SK-N-SH (cell line): ENCODE measurements at regions of chr5 and their contacts with region 1.

Region 1: GRCh38 chr5:140042643-140043500 is at the start of gene NRG2:
- DNase-seq: peak; percentile 94
- H3K4me3 ChIP-seq: peak within 1 kb of the TSS; percentile 88 to 92
- H3K27ac ChIP-seq: peak within 1 kb of the TSS; percentile 67 to 93; a peak in 3 of 4 replicates
- H3K4me1 ChIP-seq: peaks cover 0 to 32% of the 10 kb centered on the region in 2 experiments; a peak in 2 of 4 replicates
- H3K27me3 ChIP-seq: 0 out of 2 replicates have a peak, but pooled peaks cover 4% of the 10 kb centered on the region
- CTCF ChIP-seq: peak; percentile 62
- EP300 ChIP-seq: no peak
- RAD21 ChIP-seq: no peak
- polyA plus RNA-seq, gene NRG2: 3.5 and 3.7 TPM in 2 replicates

Region 2: DNA sequence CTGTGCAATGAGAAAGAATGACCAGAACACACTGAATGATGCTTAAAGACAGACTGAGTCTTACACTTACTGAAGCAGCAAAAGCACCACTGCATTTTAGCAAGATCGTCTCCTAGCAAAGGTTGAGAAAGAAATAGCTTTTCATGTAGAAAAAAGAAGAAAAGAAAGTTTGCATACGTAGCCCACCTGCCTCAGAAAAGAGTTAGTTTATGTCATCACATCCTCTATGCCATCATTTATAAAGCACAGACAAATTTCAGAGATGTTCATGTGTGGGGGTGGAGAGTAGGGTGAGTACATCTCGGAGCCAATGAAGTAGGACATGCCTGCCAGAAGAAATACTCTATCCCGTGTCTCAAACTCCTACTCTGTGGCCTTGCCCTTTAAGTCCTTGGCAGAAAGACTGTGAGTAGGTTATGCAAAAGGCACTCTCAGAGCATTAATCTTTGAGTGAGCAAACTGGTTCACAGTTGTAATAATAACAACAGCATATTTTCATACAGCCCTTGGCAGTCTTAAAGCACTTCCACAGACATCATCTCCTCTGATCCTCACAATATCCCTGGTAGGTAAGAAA is 22.2 kb before region 1 on chr5:
- CTCF ChIA-PET with region 1: interaction called, 18 read pairs
- POLR2A ChIA-PET with region 1: no interaction called
- DNase-seq: no peak
- H3K4me3 ChIP-seq: no peak overlapping the region
- H3K27ac ChIP-seq: no peak overlapping the region
- H3K4me1 ChIP-seq: peaks cover 0 to 10% of the 10 kb centered on the region in 2 experiments; a peak in 1 of 4 replicates
- H3K27me3 ChIP-seq: no peaks in the 10 kb centered on the region
- CTCF ChIP-seq: no peak
- EP300 ChIP-seq: no peak
- RAD21 ChIP-seq: no peak

Region 3: DNA sequence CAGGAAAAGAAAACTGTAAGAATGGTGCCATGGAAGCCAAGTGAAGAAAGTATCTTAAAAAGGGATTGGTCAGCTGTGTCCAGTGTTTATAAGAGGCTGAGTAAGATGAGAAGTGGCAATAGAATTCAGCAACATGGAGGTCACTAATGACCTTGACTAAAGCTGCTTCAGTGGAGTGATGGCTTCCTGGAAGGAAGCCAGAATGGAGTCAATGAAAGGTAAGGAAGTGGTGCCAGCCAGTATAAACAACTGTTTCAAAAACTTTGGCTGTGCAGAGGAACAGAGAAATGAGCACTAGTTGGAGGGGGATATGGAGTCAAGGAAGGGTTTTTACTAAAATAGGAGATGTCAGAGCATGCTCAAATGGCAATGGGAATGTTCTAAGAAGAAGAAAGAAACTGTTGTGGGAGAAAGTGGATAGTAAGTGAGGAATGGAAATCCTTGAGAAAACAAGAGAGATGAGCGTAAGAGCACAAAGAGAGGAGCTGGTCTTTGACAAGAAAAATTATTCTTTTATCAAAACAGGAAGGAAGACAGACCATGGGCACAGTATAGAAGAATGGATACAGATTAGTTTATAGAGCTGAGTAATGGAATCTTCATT is 11.3 kb after region 1 on chr5:
- CTCF ChIA-PET with region 1: interaction called, 22 read pairs
- POLR2A ChIA-PET with region 1: no interaction called
- DNase-seq: no peak
- H3K4me3 ChIP-seq: no peak overlapping the region
- H3K27ac ChIP-seq: no peak overlapping the region
- H3K4me1 ChIP-seq: no peaks in the 10 kb centered on the region
- H3K27me3 ChIP-seq: peaks cover 17% of the 10 kb centered on the region; the same call in 1 of the 2 replicates
- CTCF ChIP-seq: no peak
- EP300 ChIP-seq: no peak
- RAD21 ChIP-seq: no peak

Region 4: GRCh38 chr5:140060816-140061215 is 17.9 kb after region 1 on chr5:
- CTCF ChIA-PET with region 1: interaction called, 22 read pairs
- POLR2A ChIA-PET with region 1: no interaction called
- DNase-seq: no peak
- H3K4me3 ChIP-seq: no peak overlapping the region
- H3K27ac ChIP-seq: no peak overlapping the region
- H3K4me1 ChIP-seq: no peaks in the 10 kb centered on the region
- H3K27me3 ChIP-seq: peaks cover 55% of the 10 kb centered on the region; the same call in 1 of the 2 replicates
- CTCF ChIP-seq: no peak
- EP300 ChIP-seq: no peak
- RAD21 ChIP-seq: no peak